Right ventricle myocardium inferior (tissue), 1 donor: ENCODE measurements at regions of chr19 and their contacts with region 1.

Region 1: DNA sequence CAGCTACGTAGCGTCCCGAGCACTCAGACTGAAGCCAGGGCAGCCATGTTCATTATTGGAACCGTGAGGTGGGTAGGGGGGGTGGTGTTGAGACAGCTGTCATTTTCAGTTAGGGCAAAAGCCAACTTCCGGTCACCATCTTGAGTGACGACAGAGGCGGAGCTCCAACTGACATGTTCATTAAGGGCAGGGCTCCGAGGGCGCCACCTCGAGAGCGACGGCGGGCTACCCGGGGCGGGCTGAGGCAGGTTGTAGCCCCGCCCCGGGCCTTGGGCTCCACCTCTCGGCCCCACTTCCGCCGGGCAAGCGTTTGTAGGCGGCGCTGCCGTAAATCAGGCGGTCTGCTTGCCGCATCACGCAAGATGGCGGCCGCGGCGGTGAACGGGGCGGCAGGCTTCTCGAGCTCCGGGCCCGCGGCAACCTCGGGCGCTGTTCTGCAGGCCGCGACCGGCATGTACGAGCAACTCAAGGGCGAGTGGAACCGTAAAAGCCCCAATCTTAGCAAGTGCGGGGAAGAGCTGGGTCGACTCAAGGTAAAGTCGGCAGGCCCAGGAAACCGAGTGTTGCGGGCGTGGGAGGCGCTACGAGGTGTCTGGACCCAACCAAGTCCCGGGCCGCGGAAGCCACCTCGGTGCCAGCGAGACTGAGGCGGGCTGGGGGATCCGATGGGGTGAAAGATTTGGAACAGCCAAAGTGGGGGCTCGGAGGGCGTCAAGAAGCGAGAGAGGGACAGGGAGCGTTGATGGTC is at the start of gene PSMD8:
- DNase-seq: peak; percentile 100
- ATAC-seq: peak; percentile 99
- total RNA-seq, gene PSMD8: 280 TPM

Region 2: DNA sequence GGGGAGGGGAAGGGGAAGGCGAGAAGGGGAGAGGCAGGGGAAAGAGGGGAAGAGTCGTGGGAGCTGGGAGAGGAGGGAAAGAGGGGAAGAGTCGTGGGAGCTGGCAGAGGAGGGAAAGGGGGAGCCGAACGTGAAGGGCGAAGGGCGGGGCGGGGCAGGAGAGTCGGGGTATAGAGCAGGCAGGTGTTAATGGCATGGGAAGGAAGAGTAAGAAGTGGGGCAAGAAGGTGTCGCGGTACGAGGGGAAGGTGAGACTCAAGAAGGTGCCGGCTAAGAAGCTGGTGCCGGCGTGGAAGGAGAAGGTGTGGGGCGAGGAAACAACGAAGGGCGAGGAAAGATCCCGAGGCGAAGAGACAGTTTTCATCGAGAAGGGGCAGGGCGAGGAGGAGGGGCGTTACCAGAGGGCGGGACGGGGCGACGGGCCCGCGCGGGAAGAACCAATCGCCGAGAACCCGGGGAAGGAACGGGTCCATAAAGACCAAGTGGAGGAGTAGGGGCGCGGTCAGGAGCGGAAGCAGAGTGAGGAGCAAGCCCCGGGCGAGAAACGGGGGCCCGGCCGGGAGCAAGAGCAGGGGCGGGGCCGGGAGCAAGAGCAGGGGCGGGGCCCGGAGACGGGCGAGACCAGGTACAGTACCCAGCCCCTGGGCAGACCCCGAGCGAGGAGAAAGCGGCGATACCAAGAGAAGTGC is 38.5 kb before region 1 on chr19:
- intact Hi-C with region 1: loop called (anchors 1 kb)
- DNase-seq: peak; percentile 97
- ATAC-seq: peak; percentile 93

Region 3: GRCh38 chr19:38402967-38403861 is 28.6 kb after region 1 on chr19 and contains the start of gene FAM98C:
- intact Hi-C with region 1: loop called (anchors 2 kb)
- DNase-seq: peak; percentile 98
- ATAC-seq: peak; percentile 99
- total RNA-seq, gene FAM98C: 15.1 TPM